Colonic mucosa (tissue), 4 donors: ENCODE measurements at regions of chr1 and their contacts with region 1.

Region 1: GRCh38 chr1:58546520-58547308 is at the start of gene OMA1:
- DNase-seq: peak; percentile 97
- H3K4me3 ChIP-seq: peak within 1 kb of the TSS; percentile 80
- H3K27ac ChIP-seq: peak within 1 kb of the TSS; percentile 98
- H3K4me1 ChIP-seq: no peaks in the 10 kb centered on the region
- H3K27me3 ChIP-seq: no peaks in the 10 kb centered on the region
- CTCF ChIP-seq: peak; percentile 92
- total RNA-seq, gene OMA1: 30.4 to 32.3 TPM

Region 2: GRCh38 chr1:58249737-58250586 is 296.8 kb before region 1 on chr1:
- intact Hi-C with region 1: no loop called
- DNase-seq: no peak
- H3K4me3 ChIP-seq: peak overlapping the region; percentile 7
- H3K27ac ChIP-seq: no peak overlapping the region
- H3K4me1 ChIP-seq: no peaks in the 10 kb centered on the region
- H3K27me3 ChIP-seq: peaks cover 14% of the 10 kb centered on the region
- CTCF ChIP-seq: no peak

Region 3: DNA sequence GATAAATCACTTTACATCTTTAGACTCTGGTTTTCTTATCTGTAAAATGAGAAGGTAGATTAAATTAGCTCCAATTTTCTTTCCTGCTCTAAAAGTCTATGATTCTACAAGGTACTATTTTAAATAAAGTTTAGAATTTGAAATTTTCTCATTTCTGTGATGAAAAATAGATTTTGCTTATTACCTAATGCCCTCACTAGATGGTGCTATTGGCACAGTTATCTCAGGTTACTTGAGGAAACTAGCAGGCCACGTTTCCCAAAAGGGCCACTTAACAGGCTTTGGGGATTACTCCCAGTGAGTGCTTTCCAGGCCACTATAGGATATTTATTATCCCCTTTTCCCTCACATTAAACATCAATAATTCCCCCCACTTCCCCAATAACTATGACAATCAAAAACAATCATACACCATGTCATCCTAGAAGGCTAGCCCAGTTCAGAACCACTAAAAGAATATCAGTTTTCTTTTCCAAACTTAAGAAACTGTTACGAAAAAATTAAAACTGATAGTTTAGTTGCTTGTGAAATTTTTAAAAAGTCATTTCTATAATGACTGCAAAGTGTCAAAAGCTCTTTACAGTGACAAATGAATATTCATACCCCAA is 30.8 kb before region 1 on chr1:
- intact Hi-C with region 1: loop called (anchors 2 kb)
- DNase-seq: peak; percentile 27
- H3K4me3 ChIP-seq: no peak overlapping the region
- H3K27ac ChIP-seq: no peak overlapping the region
- H3K4me1 ChIP-seq: no peaks in the 10 kb centered on the region
- H3K27me3 ChIP-seq: no peaks in the 10 kb centered on the region
- CTCF ChIP-seq: peak; percentile 52

Region 4: GRCh38 chr1:58652651-58653184 is 106.0 kb after region 1 on chr1:
- intact Hi-C with region 1: loop called (anchors 10 kb)
- DNase-seq: peak; percentile 61
- H3K4me3 ChIP-seq: no peak overlapping the region
- H3K27ac ChIP-seq: no peak overlapping the region
- H3K4me1 ChIP-seq: no peaks in the 10 kb centered on the region
- H3K27me3 ChIP-seq: no peaks in the 10 kb centered on the region
- CTCF ChIP-seq: peak; percentile 87